ENCODE measurements at regions of chr7 and their contacts with region 1.

Region 1: GRCh38 chr7:42911454-42912447 is at the start of gene C7orf25:
- DNase-seq: peak; percentile 89 to 91 (median 90)
- H3K4me3 ChIP-seq: peak within 1 kb of the TSS; percentile 54 to 83 (median 68)
- H3K4me3 Mint-ChIP-seq: peak within 1 kb of the TSS; percentile 85 to 97
- H3K27ac ChIP-seq: peak within 1 kb of the TSS in 1 of 2 donors; percentile 79
- H3K27ac Mint-ChIP-seq: peak within 1 kb of the TSS in 6 of 7 donors; percentile 46 to 90 (median 80)
- H3K4me1 ChIP-seq: peaks cover 11 to 24% of the 10 kb centered on the region in 2 donors
- H3K4me1 Mint-ChIP-seq: peaks cover 41% of the 10 kb centered on the region
- H3K27me3 ChIP-seq: no peaks in the 10 kb centered on the region
- H3K27me3 Mint-ChIP-seq: no peaks in the 10 kb centered on the region
- CTCF ChIP-seq: no peak
- polyA plus RNA-seq, gene C7orf25: 0.96 to 2.6 (median 2.5) TPM

Region 2: DNA sequence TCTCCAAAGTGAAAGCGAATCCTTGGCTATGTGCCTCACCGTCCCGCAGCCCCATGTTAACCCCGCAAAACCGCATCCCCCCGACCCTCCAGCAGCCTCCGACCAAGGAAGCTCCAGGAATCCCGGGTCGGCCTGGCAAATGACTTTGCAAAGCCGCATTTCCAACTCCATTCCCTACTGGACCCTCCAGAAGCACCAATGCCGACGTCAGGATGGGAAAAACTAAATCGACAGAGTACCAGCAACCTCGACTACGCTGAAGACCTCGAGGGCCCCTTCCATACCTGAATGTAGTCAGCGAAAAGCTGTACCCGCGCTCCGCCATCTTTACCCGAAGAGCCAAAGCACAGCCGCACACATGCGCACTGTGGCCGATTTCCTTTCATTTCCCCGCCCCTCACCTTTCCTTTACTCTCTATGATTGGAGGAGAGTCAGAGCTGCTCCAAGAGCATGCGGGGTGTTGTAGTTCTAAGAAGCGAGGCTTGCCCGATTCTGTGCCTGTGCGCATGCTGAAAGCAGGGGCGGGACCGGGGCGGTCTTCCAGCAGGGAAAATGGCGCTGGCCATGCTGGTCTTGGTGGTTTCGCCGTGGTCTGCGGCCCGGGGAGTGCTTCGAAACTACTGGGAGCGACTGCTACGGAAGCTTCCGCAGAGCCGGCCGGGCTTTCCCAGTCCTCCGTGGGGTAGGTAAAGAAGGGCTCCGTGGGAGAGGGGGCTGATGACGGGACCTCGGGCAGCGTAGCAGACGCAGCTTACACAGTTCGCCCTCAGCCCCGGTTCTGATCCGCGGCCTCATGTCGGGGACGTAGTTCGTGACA is 20.3 kb after region 1 on chr7 and contains the starts of genes MRPL32 and PSMA2:
- intact Hi-C with region 1: loop called (anchors 2 kb)
- DNase-seq: peak; percentile 94 to 98 (median 95)
- H3K4me3 ChIP-seq: peak within 1 kb of the TSS; percentile 90 to 100 (median 98)
- H3K4me3 Mint-ChIP-seq: peak within 1 kb of the TSS; percentile 99 to 100
- H3K27ac ChIP-seq: peak within 1 kb of the TSS; percentile 79 to 94
- H3K27ac Mint-ChIP-seq: peak within 1 kb of the TSS; percentile 92 to 99 (median 97)
- H3K4me1 ChIP-seq: peaks cover 26 to 42% of the 10 kb centered on the region in 2 donors
- H3K4me1 Mint-ChIP-seq: peaks cover 51% of the 10 kb centered on the region
- H3K27me3 ChIP-seq: no peaks in the 10 kb centered on the region
- H3K27me3 Mint-ChIP-seq: no peaks in the 10 kb centered on the region
- CTCF ChIP-seq: no peak
- polyA plus RNA-seq, gene MRPL32: 23.4 to 49.6 (median 39.5) TPM
- polyA plus RNA-seq, gene PSMA2: 51.8 to 294 (median 283) TPM

Region 3: DNA sequence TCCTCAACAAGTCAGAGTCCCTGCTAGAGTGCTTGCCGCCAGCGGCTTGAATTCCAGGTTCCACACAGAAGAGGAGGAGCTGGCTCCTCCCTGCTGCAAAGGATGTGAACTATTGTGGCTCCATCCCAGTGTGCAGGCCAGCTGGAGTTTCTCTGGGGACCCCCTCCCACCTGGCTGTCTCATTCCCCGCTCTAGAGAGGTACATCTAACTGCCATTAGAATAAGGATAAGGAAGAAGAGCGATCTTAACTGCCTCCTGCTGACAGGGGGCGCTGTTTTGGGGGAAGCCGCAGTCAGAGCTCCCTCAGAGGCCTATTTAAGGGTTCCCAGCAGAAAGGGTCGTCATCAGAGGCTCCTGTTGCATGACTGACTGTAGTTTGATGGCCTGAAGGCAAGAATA is 159.9 kb after region 1 on chr7:
- intact Hi-C with region 1: no loop called
- DNase-seq: no peak
- H3K4me3 ChIP-seq: no peak overlapping the region
- H3K4me3 Mint-ChIP-seq: no peak overlapping the region
- H3K27ac ChIP-seq: no peak overlapping the region
- H3K27ac Mint-ChIP-seq: no peak overlapping the region
- H3K4me1 ChIP-seq: no peaks in the 10 kb centered on the region
- H3K4me1 Mint-ChIP-seq: no peaks in the 10 kb centered on the region
- H3K27me3 ChIP-seq: no peaks in the 10 kb centered on the region
- H3K27me3 Mint-ChIP-seq: peaks cover 2 to 13% (median 2%) of the 10 kb centered on the region in 3 donors
- CTCF ChIP-seq: peak; percentile 28

Region 4: GRCh38 chr7:44490351-44491200 is 1578.8 kb after region 1 on chr7 and contains the start of gene NUDCD3:
- intact Hi-C with region 1: loop called in 1 of 2 experiments (anchors 10 kb)
- DNase-seq: peak; percentile 77 to 78 (median 77)
- H3K4me3 ChIP-seq: peak within 1 kb of the TSS; percentile 60 to 80 (median 78)
- H3K4me3 Mint-ChIP-seq: peak within 1 kb of the TSS; percentile 74 to 94
- H3K27ac ChIP-seq: peak within 1 kb of the TSS; percentile 84 to 95
- H3K27ac Mint-ChIP-seq: peak within 1 kb of the TSS; percentile 86 to 98 (median 92)
- H3K4me1 ChIP-seq: peaks cover 13 to 21% of the 10 kb centered on the region in 2 donors
- H3K4me1 Mint-ChIP-seq: peaks cover 40% of the 10 kb centered on the region
- H3K27me3 ChIP-seq: no peaks in the 10 kb centered on the region
- H3K27me3 Mint-ChIP-seq: peaks cover 0 to 4% (median 2%) of the 10 kb centered on the region in 3 donors
- CTCF ChIP-seq: no peak
- polyA plus RNA-seq, gene NUDCD3: 13.6 to 26.5 (median 21.6) TPM